ENCODE measurements at regions of chr5 and their contacts with region 1.

Region 1: DNA sequence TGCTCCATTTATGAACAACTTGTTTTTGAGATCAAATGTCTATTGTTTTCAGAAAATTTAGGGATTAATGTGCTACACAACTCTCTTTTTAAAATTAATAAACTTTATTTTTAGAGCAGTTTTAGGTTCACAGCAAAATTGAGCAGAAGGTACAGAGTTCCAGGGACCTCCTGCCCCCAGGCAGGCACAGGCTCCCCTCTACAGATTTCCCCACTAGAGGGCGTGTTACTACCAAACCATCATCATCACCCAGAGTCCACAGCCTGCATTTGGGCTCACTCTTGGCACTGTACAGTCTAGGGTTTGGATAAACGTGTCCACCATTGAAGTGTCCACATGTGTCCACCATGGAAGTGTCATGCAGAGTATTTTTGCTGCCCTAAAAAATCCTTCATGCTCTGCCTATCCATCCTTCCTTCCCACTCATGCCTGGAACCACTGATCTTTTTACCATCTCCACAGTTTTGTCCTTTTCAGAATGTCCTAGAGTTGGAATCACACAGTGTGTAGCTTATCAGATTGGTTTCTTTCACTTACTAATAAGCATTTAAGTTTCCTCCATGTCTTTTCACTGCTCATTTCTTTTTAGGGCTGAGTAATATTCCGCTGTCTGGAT is 61.7 kb downstream of the MRPL36 start:
- DNase-seq: peak; percentile 21
- H3K4me3 Mint-ChIP-seq: no peak overlapping the region
- H3K27ac Mint-ChIP-seq: no peak overlapping the region
- H3K4me1 Mint-ChIP-seq: no peaks in the 10 kb centered on the region
- H3K27me3 Mint-ChIP-seq: peaks cover 27% of the 10 kb centered on the region

Region 2: DNA sequence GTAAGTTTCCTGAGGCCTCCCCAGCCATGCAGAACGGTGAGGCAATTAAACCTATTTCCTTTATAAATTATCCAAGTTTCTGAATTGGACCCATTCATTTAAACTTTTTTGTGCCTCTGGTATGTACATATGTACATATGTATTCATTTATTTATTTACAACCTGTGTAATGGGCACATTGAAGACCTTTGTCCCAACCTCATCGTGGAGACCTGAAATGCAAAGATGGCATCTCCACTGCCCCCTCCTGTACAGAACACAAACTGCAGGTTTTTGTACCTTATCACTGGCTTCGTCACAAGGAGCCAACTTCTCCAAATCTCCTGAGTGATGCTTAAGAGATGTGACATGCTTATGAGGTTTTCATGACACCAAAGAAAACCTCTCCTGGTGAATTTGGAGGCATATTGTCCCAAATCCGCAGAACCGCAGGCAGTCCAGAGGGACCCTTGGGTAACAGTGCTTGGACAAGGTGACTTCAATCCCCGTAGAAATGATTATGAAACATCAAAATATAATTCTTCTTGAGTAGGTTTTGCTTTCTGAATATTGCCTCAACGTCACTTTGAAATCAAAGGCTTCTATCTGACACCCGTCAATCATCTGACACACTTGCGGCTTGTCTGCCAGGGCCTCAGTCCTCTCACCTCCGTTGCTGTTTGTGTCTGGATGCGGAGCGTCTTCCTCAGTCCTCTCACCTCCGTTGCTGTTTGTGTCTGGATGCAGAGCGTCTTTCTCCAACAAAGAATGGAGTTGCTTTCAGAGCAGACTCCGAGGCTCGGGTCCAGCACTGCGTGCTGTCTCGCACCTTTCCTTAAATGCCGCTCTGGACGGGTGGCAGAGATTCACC is 279.9 kb after region 1 on chr5:
- intact Hi-C with region 1: loop called (anchors 1 kb)
- DNase-seq: no peak
- H3K4me3 Mint-ChIP-seq: no peak overlapping the region
- H3K27ac Mint-ChIP-seq: no peak overlapping the region
- H3K4me1 Mint-ChIP-seq: no peaks in the 10 kb centered on the region
- H3K27me3 Mint-ChIP-seq: no peaks in the 10 kb centered on the region

Region 3: GRCh38 chr5:2200261-2200950 is 462.5 kb after region 1 on chr5:
- intact Hi-C with region 1: no loop called
- DNase-seq: no peak
- H3K4me3 Mint-ChIP-seq: no peak overlapping the region
- H3K27ac Mint-ChIP-seq: no peak overlapping the region
- H3K4me1 Mint-ChIP-seq: no peaks in the 10 kb centered on the region
- H3K27me3 Mint-ChIP-seq: no peaks in the 10 kb centered on the region

Measured in activated T-helper 1 cell treated with anti-CD3 and anti-CD28 coated beads, Interleukin-12 subunit alpha, Interleukin-12 subunit beta, Interleukin-2, Interleukin-4 antibody, amounts not matched to agents 30 ng/mL and 10 ng/mL and 1 ng/mL, durations not matched to agents 14 hours and 24 hours and 36 hours (primary cell).